Calu3 (cell line): ENCODE measurements at regions of chr2 and their contacts with region 1.

Region 1: GRCh38 chr2:234074751-234075517 is 24.4 kb downstream of the SPP2 start:
- DNase-seq: no peak
- H3K4me3 Mint-ChIP-seq: no peak overlapping the region
- H3K27ac Mint-ChIP-seq: no peak overlapping the region
- H3K4me1 Mint-ChIP-seq: peaks cover 34% of the 10 kb centered on the region
- H3K27me3 Mint-ChIP-seq: no peaks in the 10 kb centered on the region
- CTCF ChIP-seq: no peak

Region 2: GRCh38 chr2:233338046-233338445 is 736.9 kb before region 1 on chr2:
- CTCF ChIA-PET with region 1: no interaction called
- intact Hi-C with region 1: no loop called
- DNase-seq: no peak
- H3K4me3 Mint-ChIP-seq: no peak overlapping the region
- H3K27ac Mint-ChIP-seq: no peak overlapping the region
- H3K4me1 Mint-ChIP-seq: no peaks in the 10 kb centered on the region
- H3K27me3 Mint-ChIP-seq: peaks cover 50% of the 10 kb centered on the region
- CTCF ChIP-seq: no peak

Region 3: GRCh38 chr2:234022424-234022823 is 52.5 kb before region 1 on chr2:
- CTCF ChIA-PET with region 1: interaction called, 10 read pairs
- intact Hi-C with region 1: no loop called
- DNase-seq: no peak
- H3K4me3 Mint-ChIP-seq: no peak overlapping the region
- H3K27ac Mint-ChIP-seq: no peak overlapping the region
- H3K4me1 Mint-ChIP-seq: peaks cover 15% of the 10 kb centered on the region
- H3K27me3 Mint-ChIP-seq: no peaks in the 10 kb centered on the region
- CTCF ChIP-seq: no peak

Region 4: GRCh38 chr2:235050992-235051351 is 976.0 kb after region 1 on chr2:
- CTCF ChIA-PET with region 1: no interaction called
- intact Hi-C with region 1: no loop called
- DNase-seq: peak; percentile 91
- H3K4me3 Mint-ChIP-seq: peak overlapping the region; percentile 41
- H3K27ac Mint-ChIP-seq: peak overlapping the region; percentile 59
- H3K4me1 Mint-ChIP-seq: peaks cover 64% of the 10 kb centered on the region
- H3K27me3 Mint-ChIP-seq: no peaks in the 10 kb centered on the region
- CTCF ChIP-seq: no peak